HCT116 (cell line): ENCODE measurements at regions of chr1 and their contacts with region 1.

Region 1: GRCh38 chr1:93878889-93879586 is at the start of gene DNTTIP2:
- DNase-seq: peak; percentile 79
- ATAC-seq: peak; percentile 92
- H3K4me3 ChIP-seq: peak within 1 kb of the TSS; percentile 89 to 94
- H3K27ac ChIP-seq: peak within 1 kb of the TSS; percentile 78
- H3K4me1 ChIP-seq: peaks cover 12 to 17% of the 10 kb centered on the region in 2 experiments
- H3K27me3 ChIP-seq: no peaks in the 10 kb centered on the region
- CTCF ChIP-seq: no peak
- POLR2A ChIP-seq: peak; percentile 88
- RAD21 ChIP-seq: no peak
- total RNA-seq, gene DNTTIP2: 66.1 TPM

Region 2: DNA sequence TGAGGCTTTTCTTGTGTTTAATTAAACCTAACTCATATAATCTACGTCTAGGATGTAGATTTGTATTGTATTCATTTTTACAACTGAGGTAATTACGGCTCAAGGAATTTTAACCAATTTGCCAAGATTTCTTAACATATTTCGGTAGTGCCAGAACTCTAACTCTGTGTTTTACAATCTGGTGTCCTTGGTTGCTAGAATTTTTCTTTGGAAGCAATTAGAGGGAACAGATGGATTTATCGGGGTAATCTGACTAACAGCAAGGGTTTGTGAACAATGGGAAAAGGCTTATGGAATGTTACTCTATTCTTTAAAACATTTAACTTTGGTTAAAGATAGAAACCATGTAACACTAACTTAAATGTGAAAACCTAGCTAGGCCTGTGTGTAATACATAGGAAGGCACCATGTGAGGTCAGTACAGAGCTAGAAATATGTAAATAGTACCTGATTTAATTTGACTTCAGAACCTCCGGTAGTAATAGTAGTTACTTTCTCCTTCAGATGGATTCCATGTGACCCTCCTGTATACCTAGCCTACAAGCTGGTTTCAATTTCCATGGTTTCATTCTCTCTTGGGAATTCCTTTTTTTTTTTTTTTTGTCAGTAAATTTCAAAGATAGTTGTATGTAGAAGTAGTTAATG is 798.7 kb before region 1 on chr1:
- CTCF ChIA-PET with region 1: no interaction called
- POLR2A ChIA-PET with region 1: no interaction called
- RAD21 ChIA-PET with region 1: no interaction called
- intact Hi-C with region 1: loop called (anchors 10 kb)
- DNase-seq: peak; percentile 60
- ATAC-seq: peak; percentile 58
- H3K4me3 ChIP-seq: peak overlapping the region; percentile 98
- H3K27ac ChIP-seq: peak overlapping the region; percentile 71
- H3K4me1 ChIP-seq: peaks cover 6 to 23% of the 10 kb centered on the region in 2 experiments; a peak in 3 of 4 replicates
- H3K27me3 ChIP-seq: no peaks in the 10 kb centered on the region
- CTCF ChIP-seq: peak; percentile 37 to 56 (median 44); a peak in 3 of 6 replicates
- POLR2A ChIP-seq: no peak
- RAD21 ChIP-seq: peak; percentile 60

Region 3: GRCh38 chr1:93925206-93925605 is 46.2 kb after region 1 on chr1:
- CTCF ChIA-PET with region 1: no interaction called
- POLR2A ChIA-PET with region 1: no interaction called
- RAD21 ChIA-PET with region 1: no interaction called
- intact Hi-C with region 1: no loop called
- DNase-seq: no peak
- ATAC-seq: no peak
- H3K4me3 ChIP-seq: no peak overlapping the region
- H3K27ac ChIP-seq: no peak overlapping the region
- H3K4me1 ChIP-seq: no peaks in the 10 kb centered on the region
- H3K27me3 ChIP-seq: no peaks in the 10 kb centered on the region
- CTCF ChIP-seq: no peak
- POLR2A ChIP-seq: no peak
- RAD21 ChIP-seq: no peak